CD8-positive, alpha-beta T cell (primary cell): ENCODE measurements at regions of chr5 and their contacts with region 1.

Region 1: DNA sequence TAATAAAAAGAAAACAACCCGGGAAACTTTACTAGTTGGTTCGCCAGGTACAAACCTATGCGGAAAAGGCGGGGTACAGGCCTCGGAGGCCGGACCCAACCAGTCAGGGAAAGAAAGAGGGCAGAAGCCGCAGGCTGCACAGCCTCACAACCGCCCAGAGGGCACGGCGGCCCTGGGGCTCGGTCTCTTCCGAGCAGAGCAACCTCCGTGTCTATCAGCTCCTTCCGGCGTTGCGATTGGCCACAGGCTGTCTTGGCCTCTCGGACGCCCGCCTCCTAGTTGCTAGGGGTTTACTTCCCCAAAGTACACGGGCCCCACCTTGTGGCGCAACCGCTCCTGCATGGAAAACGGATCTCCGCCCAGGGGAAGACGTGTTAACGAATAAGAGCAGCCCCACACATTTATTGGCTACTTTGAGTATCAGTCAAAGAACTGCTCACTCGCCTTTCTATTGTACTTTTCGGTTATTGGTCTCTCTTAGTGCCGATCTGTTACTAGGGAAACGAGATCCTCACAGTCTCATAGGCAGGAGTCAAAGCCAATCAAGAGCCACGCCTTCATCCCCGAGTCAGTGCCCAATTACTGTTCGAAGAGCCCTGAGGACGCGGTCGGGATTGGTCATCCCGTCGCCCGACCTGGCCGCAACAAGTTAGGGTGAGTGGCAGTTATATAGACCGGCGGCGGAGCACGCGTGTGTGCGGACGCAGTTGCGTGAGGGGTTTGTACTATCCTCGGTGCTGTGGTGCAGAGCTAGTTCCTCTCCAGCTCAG is at the start of gene G3BP1:
- DNase-seq: peak; percentile 98 to 100 (median 99)
- ATAC-seq: peak; percentile 76
- H3K4me3 ChIP-seq: peak within 1 kb of the TSS; percentile 70 to 88
- H3K4me3 Mint-ChIP-seq: peak within 1 kb of the TSS; percentile 86
- H3K27ac ChIP-seq: peak within 1 kb of the TSS; percentile 84 to 94
- H3K27ac Mint-ChIP-seq: peak within 1 kb of the TSS; percentile 82
- H3K4me1 ChIP-seq: peaks cover 40% of the 10 kb centered on the region
- H3K4me1 Mint-ChIP-seq: peaks cover 44% of the 10 kb centered on the region
- H3K27me3 ChIP-seq: no peaks in the 10 kb centered on the region
- H3K27me3 Mint-ChIP-seq: no peaks in the 10 kb centered on the region
- CTCF ChIP-seq: peak; percentile 42
- total RNA-seq, gene G3BP1: 89.1 to 91.1 TPM

Region 2: GRCh38 chr5:150758531-150759333 is 1012.7 kb before region 1 on chr5 and contains the start of gene DCTN4:
- CTCF ChIA-PET with region 1: no interaction called
- POLR2A ChIA-PET with region 1: interaction called, 3 read pairs
- intact Hi-C with region 1: loop called in 1 of 2 experiments (anchors 5 kb)
- DNase-seq: peak; percentile 83 to 99 (median 93)
- ATAC-seq: peak; percentile 93
- H3K4me3 ChIP-seq: peak within 1 kb of the TSS; percentile 79 to 92
- H3K4me3 Mint-ChIP-seq: no peak within 1 kb of the TSS
- H3K27ac ChIP-seq: peak within 1 kb of the TSS; percentile 89 to 100
- H3K27ac Mint-ChIP-seq: no peak within 1 kb of the TSS
- H3K4me1 ChIP-seq: peaks cover 27% of the 10 kb centered on the region
- H3K4me1 Mint-ChIP-seq: peaks cover 39% of the 10 kb centered on the region
- H3K27me3 ChIP-seq: no peaks in the 10 kb centered on the region
- H3K27me3 Mint-ChIP-seq: peaks cover 2% of the 10 kb centered on the region
- CTCF ChIP-seq: no peak
- total RNA-seq, gene DCTN4: 117 to 121 TPM

Region 3: DNA sequence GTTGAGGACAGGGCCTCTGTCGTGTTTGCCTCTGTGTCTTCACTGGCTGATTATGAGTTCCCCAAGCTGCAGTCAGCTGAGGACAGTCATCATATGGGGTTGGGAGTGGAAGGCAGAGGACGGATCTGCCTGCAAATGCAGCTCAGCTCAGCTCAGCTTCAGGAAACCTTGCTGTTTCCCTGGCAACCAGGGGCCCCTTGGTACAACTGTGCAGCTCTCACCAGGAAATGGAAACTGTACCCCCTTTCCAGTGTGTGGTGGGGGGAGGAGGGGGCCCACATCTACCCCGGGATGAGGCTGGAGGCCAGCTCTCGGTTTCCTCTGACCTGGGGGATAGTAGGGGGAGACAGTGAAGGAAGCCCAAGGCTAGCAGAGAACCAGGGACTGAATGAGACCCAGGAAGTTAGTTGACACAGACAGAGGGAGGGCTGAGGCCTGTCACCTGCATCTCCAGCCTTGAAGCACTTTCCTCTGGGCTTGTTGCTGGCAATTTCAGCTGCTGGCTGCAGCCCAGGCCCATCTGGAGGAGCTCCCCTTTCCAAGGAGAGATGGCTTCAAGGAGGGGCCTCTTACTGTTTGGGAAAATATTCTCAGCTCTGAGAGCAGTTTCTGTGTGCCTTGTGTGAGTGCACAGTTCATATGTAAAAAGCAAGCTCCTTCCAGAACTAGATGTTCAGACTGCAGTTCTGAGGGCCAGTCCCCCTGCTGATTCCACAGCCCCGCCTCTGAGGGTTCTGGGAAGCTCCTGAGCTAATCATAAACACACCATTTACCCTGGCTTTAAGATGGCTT is 620.8 kb before region 1 on chr5:
- CTCF ChIA-PET with region 1: no interaction called
- POLR2A ChIA-PET with region 1: no interaction called
- intact Hi-C with region 1: loop called (anchors 1 to 10 kb)
- DNase-seq: peak; percentile 48 to 91 (median 80)
- ATAC-seq: peak; percentile 83
- H3K4me3 ChIP-seq: peak overlapping the region in 1 of 2 experiments; percentile 37
- H3K4me3 Mint-ChIP-seq: peak overlapping the region; percentile 75
- H3K27ac ChIP-seq: peak overlapping the region; percentile 65 to 90
- H3K27ac Mint-ChIP-seq: peak overlapping the region; percentile 95
- H3K4me1 ChIP-seq: peaks cover 99% of the 10 kb centered on the region
- H3K4me1 Mint-ChIP-seq: peaks cover 97% of the 10 kb centered on the region
- H3K27me3 ChIP-seq: no peaks in the 10 kb centered on the region
- H3K27me3 Mint-ChIP-seq: no peaks in the 10 kb centered on the region
- CTCF ChIP-seq: no peak

Region 4: DNA sequence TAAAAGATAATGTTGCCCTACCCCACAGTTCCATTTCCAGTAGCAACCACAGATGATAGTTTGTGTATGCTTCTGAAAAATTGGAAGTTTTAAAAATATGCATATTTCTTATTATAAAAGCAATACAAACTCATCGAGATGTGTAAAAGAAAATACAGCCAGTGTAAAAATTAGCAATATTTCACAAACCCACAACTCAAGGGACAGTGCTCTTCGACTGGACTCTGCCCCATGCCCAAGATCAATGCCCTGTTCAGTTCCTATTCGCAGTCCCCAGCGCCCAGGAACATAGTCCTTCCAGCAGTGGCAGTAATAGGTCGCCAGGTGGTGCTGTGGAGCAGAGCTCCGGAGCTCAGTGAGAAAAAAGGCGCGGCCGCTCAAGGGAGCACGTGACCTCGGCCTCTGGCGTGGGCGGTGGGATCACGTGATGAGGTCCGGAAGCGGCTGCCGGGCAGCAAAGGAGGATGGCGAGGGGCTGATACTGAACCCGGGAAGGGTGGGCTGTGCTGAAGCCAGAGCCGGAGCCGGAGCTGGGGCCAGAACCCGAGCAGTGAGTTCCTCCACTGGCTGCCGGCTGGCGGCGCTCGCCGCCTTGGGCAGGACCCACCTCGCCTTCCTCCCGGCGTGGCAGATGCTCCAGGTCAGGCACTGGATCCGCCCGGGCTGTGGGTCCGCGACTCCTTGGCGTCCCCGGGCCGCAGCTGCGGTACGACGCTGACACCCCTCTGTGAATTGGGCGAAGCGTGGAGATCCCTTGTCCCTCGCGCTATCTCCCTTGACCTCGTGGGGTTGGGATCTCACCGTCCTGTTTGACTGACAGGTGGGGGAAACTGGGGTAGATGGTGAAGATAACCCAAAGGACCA is 324.0 kb before region 1 on chr5 and contains the start of gene SLC36A1:
- CTCF ChIA-PET with region 1: interaction called, 9 read pairs
- POLR2A ChIA-PET with region 1: interaction called, 5 read pairs
- intact Hi-C with region 1: loop called in 1 of 2 experiments (anchors 1 kb)
- DNase-seq: peak; percentile 80 to 94 (median 91)
- ATAC-seq: peak; percentile 98
- H3K4me3 ChIP-seq: peak within 1 kb of the TSS; percentile 83 to 89
- H3K4me3 Mint-ChIP-seq: peak within 1 kb of the TSS; percentile 94
- H3K27ac ChIP-seq: peak within 1 kb of the TSS; percentile 55 to 68
- H3K27ac Mint-ChIP-seq: peak within 1 kb of the TSS; percentile 89
- H3K4me1 ChIP-seq: peaks cover 8% of the 10 kb centered on the region
- H3K4me1 Mint-ChIP-seq: peaks cover 24% of the 10 kb centered on the region
- H3K27me3 ChIP-seq: peaks cover 0 to 5% of the 10 kb centered on the region in 2 experiments
- H3K27me3 Mint-ChIP-seq: peaks cover 19% of the 10 kb centered on the region
- CTCF ChIP-seq: peak; percentile 96
- total RNA-seq, gene SLC36A1: 1.5 to 2.4 TPM

Region 5: GRCh38 chr5:151740336-151740942 is 31.0 kb before region 1 on chr5:
- CTCF ChIA-PET with region 1: interaction called, 3 read pairs
- POLR2A ChIA-PET with region 1: interaction called, 13 read pairs
- intact Hi-C with region 1: no loop called
- DNase-seq: peak; percentile 10 to 74 (median 38)
- ATAC-seq: peak; percentile 71
- H3K4me3 ChIP-seq: no peak overlapping the region
- H3K4me3 Mint-ChIP-seq: no peak overlapping the region
- H3K27ac ChIP-seq: no peak overlapping the region
- H3K27ac Mint-ChIP-seq: no peak overlapping the region
- H3K4me1 ChIP-seq: peaks cover 14% of the 10 kb centered on the region
- H3K4me1 Mint-ChIP-seq: peaks cover 18% of the 10 kb centered on the region
- H3K27me3 ChIP-seq: no peaks in the 10 kb centered on the region
- H3K27me3 Mint-ChIP-seq: no peaks in the 10 kb centered on the region
- CTCF ChIP-seq: peak; percentile 79

Region 6: DNA sequence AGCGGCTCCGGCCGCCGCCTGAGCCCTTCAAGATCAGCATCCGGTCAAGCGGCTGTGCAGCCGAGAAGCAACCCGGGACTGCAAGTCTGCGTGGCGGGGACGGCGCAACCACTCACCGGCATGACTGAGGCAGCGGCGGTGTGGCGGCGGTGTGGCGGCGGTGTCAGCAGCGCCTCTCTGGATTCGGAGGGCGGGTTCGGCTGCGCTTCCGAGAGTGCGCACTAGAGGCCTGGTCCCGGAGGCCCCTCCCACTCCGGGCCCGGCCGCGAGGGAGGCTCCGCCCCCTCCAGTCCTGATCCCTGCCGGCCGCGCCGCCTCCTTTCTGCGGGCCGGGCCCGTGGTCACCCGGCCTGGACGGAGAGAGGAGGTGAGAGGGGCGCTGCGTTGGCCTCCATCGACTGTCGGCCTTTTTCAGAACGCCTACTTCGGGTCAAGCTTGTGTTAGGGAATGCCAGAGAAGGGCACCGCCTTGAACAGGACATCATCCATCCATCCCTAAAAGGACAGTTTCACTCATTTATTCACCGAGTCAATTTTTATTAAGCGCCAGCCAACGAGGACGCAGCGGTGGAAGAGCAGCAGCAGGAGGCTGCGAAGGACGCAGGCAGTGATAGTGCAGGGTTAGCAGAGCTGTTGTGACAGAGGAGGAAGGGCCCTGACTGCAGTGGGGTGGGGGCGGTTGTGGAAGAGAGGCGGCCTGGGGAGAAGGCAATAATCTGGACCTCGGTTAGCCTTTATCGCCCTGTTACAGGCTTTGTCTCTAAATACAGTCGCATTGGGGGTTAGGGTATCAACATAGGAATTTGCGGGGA is 12.8 kb before region 1 on chr5 and contains the start of gene ATOX1:
- CTCF ChIA-PET with region 1: interaction called, 14 read pairs
- POLR2A ChIA-PET with region 1: interaction called, 87 read pairs
- intact Hi-C with region 1: loop called (anchors 1 kb)
- DNase-seq: peak; percentile 82 to 94 (median 90)
- ATAC-seq: peak; percentile 99
- H3K4me3 ChIP-seq: peak within 1 kb of the TSS; percentile 61 to 91
- H3K4me3 Mint-ChIP-seq: peak within 1 kb of the TSS; percentile 95
- H3K27ac ChIP-seq: peak within 1 kb of the TSS; percentile 60 to 70
- H3K27ac Mint-ChIP-seq: peak within 1 kb of the TSS; percentile 94
- H3K4me1 ChIP-seq: peaks cover 26% of the 10 kb centered on the region
- H3K4me1 Mint-ChIP-seq: peaks cover 35% of the 10 kb centered on the region
- H3K27me3 ChIP-seq: no peaks in the 10 kb centered on the region
- H3K27me3 Mint-ChIP-seq: no peaks in the 10 kb centered on the region
- CTCF ChIP-seq: no peak
- total RNA-seq, gene ATOX1: 12.6 to 13.2 TPM